Sigmoid colon (tissue), 7 donors: ENCODE measurements at regions of chr1 and their contacts with region 1.

Region 1: GRCh38 chr1:14923727-14924452 is 229.7 kb upstream of the TMEM51 start:
- DNase-seq: peak; percentile 89
- H3K4me3 ChIP-seq: peak overlapping the region in 3 of 4 donors; percentile 51 to 65 (median 60)
- H3K27ac ChIP-seq: peak overlapping the region; percentile 55 to 71 (median 63)
- H3K4me1 ChIP-seq: peaks cover 0 to 14% (median 11%) of the 10 kb centered on the region in 4 donors
- H3K27me3 ChIP-seq: peaks cover 0 to 3% (median 0%) of the 10 kb centered on the region in 3 donors
- CTCF ChIP-seq: no peak
- EP300 ChIP-seq: no peak
- POLR2A ChIP-seq: no peak

Region 2: GRCh38 chr1:14804626-14805025 is 119.3 kb before region 1 on chr1:
- intact Hi-C with region 1: no loop called
- DNase-seq: no peak
- H3K4me3 ChIP-seq: no peak overlapping the region
- H3K27ac ChIP-seq: no peak overlapping the region
- H3K4me1 ChIP-seq: no peaks in the 10 kb centered on the region
- H3K27me3 ChIP-seq: no peaks in the 10 kb centered on the region
- CTCF ChIP-seq: no peak
- EP300 ChIP-seq: no peak
- POLR2A ChIP-seq: no peak

Region 3: GRCh38 chr1:15026151-15026489 is 102.2 kb after region 1 on chr1:
- intact Hi-C with region 1: loop called (anchors 2 kb)
- DNase-seq: no peak
- H3K4me3 ChIP-seq: no peak overlapping the region
- H3K27ac ChIP-seq: no peak overlapping the region
- H3K4me1 ChIP-seq: peaks cover 0 to 5% (median 4%) of the 10 kb centered on the region in 4 donors
- H3K27me3 ChIP-seq: no peaks in the 10 kb centered on the region
- CTCF ChIP-seq: no peak
- EP300 ChIP-seq: no peak
- POLR2A ChIP-seq: no peak